PC-9 (cell line): ENCODE measurements at regions of chr11 and their contacts with region 1.

Region 1: GRCh38 chr11:34266090-34266912 is 91.5 kb downstream of the ABTB2 start:
- DNase-seq: peak; percentile 35 to 64
- H3K4me3 ChIP-seq: no peak overlapping the region
- H3K27ac ChIP-seq: peak overlapping the region; percentile 48
- H3K4me1 ChIP-seq: peaks cover 70% of the 10 kb centered on the region
- H3K27me3 ChIP-seq: no peaks in the 10 kb centered on the region
- CTCF ChIP-seq: no peak

Region 2: DNA sequence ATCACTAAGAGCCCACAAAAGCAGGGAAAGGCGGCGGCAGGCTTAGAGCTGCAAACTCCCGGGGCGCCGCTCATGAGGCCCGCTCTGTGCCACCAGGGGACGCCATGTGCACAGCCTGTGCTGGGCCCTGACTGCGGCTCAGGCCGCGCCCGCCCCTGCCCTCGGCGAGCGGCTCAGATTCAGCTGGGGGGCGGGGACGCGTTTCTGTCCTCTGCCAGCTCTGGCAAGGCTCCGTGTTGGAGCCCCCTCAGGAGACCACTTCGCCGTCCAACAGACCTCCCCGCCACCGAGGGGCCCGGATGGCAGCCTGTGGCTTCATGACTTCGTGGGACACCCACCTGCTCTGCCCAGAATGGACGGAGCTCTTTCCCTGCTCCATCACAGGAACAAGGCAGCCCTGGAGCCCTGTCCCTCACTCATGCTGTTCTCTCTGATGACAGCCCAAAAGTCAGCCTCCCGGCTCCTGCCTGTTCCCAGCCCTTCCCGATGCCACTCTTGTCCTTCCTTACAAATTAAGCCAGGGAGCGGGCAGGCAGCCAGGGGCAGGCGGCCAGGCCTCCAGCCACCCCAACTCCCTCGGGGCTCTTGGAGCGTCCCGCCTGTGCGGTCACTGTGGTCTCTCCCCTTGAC is 91.8 kb before region 1 on chr11:
- CTCF ChIA-PET with region 1: interaction called, 11 read pairs
- POLR2A ChIA-PET with region 1: no interaction called
- intact Hi-C with region 1: no loop called
- DNase-seq: peak; percentile 53 to 85
- H3K4me3 ChIP-seq: peak overlapping the region; percentile 40; the same call in 1 of the 2 replicates
- H3K27ac ChIP-seq: no peak overlapping the region
- H3K4me1 ChIP-seq: peaks cover 8% of the 10 kb centered on the region
- H3K27me3 ChIP-seq: no peaks in the 10 kb centered on the region
- CTCF ChIP-seq: peak; percentile 92

Region 3: DNA sequence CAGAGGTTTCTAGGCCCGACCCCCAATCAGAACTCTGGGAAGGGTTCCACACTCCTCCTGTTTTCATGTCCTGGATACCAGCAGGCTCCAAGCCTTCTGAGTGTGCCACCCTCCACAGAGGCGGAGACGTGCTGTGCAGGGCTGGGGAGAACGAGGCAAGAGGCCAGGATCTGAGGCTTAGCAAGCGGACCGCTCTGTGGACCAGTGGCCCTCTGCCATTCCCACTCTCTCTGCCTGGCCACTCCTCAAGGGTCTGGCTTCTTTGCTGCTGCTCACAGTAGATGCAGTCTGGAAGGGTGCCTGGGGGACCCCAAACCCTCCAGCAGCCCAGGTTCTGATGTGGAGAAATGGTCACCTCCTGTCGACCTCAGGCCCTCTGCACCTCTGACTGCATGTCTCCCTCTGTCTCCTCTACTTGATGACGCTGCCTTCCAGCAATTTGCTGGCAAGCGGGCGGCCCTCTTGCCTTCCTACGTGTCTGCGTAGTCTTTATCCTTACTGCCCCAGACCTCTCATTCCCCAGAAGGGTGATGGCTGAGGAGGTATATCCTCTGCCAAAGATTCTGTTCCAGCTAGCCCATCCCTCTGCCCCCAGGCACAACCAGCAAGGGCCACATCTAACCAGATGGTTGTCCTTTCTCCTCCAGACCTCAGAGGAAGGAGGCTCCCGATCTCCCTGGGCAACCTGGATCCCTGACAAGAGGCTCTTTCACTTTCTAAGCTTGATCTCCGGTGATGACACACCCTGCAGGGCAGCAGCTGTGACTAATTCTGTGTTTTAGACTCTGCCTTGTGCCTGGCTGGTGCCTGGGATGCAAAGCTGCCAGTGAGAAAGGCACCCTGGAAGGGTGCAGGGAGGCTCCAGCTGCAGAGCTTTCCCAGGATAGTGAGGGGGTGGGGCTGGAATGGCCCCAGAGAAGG is 73.6 kb before region 1 on chr11:
- CTCF ChIA-PET with region 1: interaction called, 4 read pairs
- POLR2A ChIA-PET with region 1: interaction called, 3 read pairs
- intact Hi-C with region 1: loop called (anchors 1 kb)
- DNase-seq: peak; percentile 83 to 85
- H3K4me3 ChIP-seq: no peak overlapping the region
- H3K27ac ChIP-seq: peak overlapping the region; percentile 25; the same call in 1 of the 2 replicates
- H3K4me1 ChIP-seq: peaks cover 37% of the 10 kb centered on the region
- H3K27me3 ChIP-seq: no peaks in the 10 kb centered on the region
- CTCF ChIP-seq: no peak

Region 4: GRCh38 chr11:34243726-34244464 is 22.4 kb before region 1 on chr11:
- CTCF ChIA-PET with region 1: no interaction called
- POLR2A ChIA-PET with region 1: interaction called, 10 read pairs
- intact Hi-C with region 1: no loop called
- DNase-seq: peak; percentile 90 to 95
- H3K4me3 ChIP-seq: no peak overlapping the region
- H3K27ac ChIP-seq: peak overlapping the region; percentile 76
- H3K4me1 ChIP-seq: peaks cover 64% of the 10 kb centered on the region
- H3K27me3 ChIP-seq: no peaks in the 10 kb centered on the region
- CTCF ChIP-seq: no peak

Region 5: DNA sequence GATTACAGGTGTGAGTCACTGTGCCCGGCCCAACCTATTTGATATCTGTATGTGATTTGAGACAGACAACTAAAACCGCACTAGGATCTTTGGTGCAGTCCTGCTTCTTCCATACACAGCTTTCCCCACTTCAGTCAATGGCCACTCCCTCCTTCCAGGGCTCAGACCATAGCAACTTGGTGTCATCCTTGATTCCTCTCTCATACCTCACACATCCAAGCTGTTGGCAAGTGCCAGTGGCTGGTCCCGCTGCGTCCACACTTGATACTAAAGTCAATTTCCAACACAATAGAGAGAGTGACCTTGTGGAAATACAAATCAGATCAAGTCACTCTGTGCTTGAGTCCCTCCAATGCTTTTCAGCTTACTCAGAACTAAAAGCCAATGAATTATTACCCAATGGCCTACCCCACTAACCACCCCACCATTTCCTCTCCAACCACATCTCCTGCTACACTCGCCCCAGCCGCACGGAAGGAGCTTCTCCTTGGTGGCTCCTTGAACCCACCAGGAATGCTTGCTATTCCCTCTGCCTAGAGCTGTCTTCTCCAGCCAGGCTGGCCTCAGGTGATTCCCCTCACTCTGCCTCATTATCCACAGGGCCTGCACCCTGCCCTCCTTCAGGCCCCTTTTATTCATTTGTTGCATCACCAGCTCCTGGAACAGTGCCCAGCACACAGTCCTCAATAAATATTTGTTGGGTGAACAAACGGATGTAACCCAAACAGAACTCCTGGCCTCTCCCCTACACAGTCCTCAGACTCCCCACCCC is 78.7 kb after region 1 on chr11:
- CTCF ChIA-PET with region 1: interaction called, 3 read pairs
- POLR2A ChIA-PET with region 1: interaction called, 5 read pairs
- intact Hi-C with region 1: loop called (anchors 1 kb)
- DNase-seq: peak; percentile 90 to 99
- H3K4me3 ChIP-seq: peak overlapping the region; percentile 40; the same call in 1 of the 2 replicates
- H3K27ac ChIP-seq: peak overlapping the region; percentile 91
- H3K4me1 ChIP-seq: peaks cover 99% of the 10 kb centered on the region
- H3K27me3 ChIP-seq: no peaks in the 10 kb centered on the region
- CTCF ChIP-seq: no peak